Calu3 (cell line): ENCODE measurements at regions of chr1 and their contacts with region 1.

Region 1: GRCh38 chr1:54886724-54887664 is at the start of gene DHCR24:
- DNase-seq: peak; percentile 91
- H3K4me3 Mint-ChIP-seq: peak within 1 kb of the TSS; percentile 85
- H3K27ac Mint-ChIP-seq: peak within 1 kb of the TSS; percentile 38
- H3K4me1 Mint-ChIP-seq: peaks cover 50% of the 10 kb centered on the region
- H3K27me3 Mint-ChIP-seq: no peaks in the 10 kb centered on the region
- CTCF ChIP-seq: no peak
- total RNA-seq, gene DHCR24: 448 and 469 TPM in 2 replicates

Region 2: GRCh38 chr1:54934869-54935268 is 47.9 kb after region 1 on chr1:
- CTCF ChIA-PET with region 1: interaction called, 7 read pairs
- intact Hi-C with region 1: loop called (anchors 5 kb)
- DNase-seq: no peak
- H3K4me3 Mint-ChIP-seq: no peak overlapping the region
- H3K27ac Mint-ChIP-seq: no peak overlapping the region
- H3K4me1 Mint-ChIP-seq: peaks cover 16% of the 10 kb centered on the region
- H3K27me3 Mint-ChIP-seq: no peaks in the 10 kb centered on the region
- CTCF ChIP-seq: no peak

Region 3: GRCh38 chr1:54944610-54945544 is 57.9 kb after region 1 on chr1:
- CTCF ChIA-PET with region 1: interaction called, 11 read pairs
- intact Hi-C with region 1: no loop called
- DNase-seq: peak; percentile 78
- H3K4me3 Mint-ChIP-seq: peak overlapping the region; percentile 9
- H3K27ac Mint-ChIP-seq: no peak overlapping the region
- H3K4me1 Mint-ChIP-seq: peaks cover 14% of the 10 kb centered on the region
- H3K27me3 Mint-ChIP-seq: peaks cover 16% of the 10 kb centered on the region
- CTCF ChIP-seq: peak; percentile 77

Region 4: DNA sequence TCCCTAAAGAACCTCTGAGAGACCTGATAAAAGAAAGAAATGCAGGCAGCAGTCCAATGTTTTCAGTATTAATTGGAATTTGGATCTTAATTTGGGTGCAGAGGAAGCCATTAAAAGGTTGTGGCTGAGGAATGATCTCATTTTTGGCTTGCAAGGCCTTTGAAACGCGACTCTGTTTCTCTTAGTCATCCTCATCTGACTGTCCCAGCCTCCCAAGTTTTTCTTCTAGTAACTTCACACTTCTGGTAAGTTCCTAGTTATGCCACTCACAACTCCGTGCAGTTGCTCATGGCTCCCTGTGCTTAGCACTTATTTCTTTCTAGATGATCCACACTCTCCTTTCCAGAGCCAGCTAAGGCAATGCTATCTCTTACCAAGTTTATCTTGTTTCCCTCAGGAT is 475.6 kb after region 1 on chr1:
- CTCF ChIA-PET with region 1: no interaction called
- intact Hi-C with region 1: no loop called
- DNase-seq: no peak
- H3K4me3 Mint-ChIP-seq: no peak overlapping the region
- H3K27ac Mint-ChIP-seq: no peak overlapping the region
- H3K4me1 Mint-ChIP-seq: no peaks in the 10 kb centered on the region
- H3K27me3 Mint-ChIP-seq: peaks cover 38% of the 10 kb centered on the region
- CTCF ChIP-seq: no peak